ENCODE measurements at regions of chr10 and their contacts with region 1.

Region 1: DNA sequence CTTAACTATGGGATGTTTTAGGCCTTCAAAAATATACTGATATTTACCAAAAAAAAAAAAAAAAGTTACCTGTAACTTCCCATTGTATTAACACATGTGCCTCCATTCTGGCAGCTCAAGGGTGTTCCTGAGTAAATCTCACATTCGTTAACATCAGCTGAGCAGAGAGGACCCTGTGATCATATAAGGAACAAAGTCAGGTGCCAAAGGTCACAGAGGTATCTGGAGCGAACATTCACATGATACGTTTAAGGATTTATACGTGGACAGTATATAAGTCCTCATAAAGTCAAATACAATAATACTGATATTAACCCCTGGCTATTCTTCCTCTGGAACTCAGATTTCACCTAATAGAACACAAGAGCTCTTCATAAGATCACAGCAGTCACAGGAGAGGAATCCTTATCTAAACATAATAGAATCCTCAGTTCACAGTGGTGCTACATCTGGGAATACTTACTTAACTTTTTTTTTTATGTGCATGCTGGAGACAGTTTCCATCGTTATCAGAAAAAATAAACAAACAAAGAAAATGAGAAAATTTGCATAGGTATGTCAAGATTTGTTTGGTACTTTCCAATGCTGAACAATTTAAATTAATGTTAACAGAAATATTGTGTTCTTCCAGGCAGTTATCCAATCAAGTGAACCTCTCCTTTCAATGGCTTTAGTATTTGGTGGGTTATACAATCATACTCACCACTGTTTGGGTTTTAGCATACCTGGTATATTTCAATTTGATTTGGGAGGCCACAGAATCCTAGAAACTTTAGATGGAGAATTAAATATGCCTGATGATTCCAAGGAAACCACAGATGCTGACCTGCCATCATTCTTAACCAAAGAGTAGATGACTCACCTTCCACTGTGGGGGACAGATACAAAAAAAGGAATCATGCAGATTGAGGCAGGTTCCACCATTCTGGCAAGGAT is 6.6 kb downstream of the CUBN start:
- DNase-seq: no peak
- H3K4me3 ChIP-seq: no peak overlapping the region
- H3K4me3 Mint-ChIP-seq: peak overlapping the region; percentile 51
- H3K27ac Mint-ChIP-seq: peak overlapping the region; percentile 68
- H3K4me1 ChIP-seq: peaks cover 76% of the 10 kb centered on the region
- H3K4me1 Mint-ChIP-seq: peaks cover 67% of the 10 kb centered on the region
- H3K27me3 ChIP-seq: no peaks in the 10 kb centered on the region
- H3K27me3 Mint-ChIP-seq: no peaks in the 10 kb centered on the region
- CTCF ChIP-seq: no peak

Region 2: GRCh38 chr10:17067376-17068264 is 55.4 kb before region 1 on chr10:
- CTCF ChIA-PET with region 1: no interaction called
- POLR2A ChIA-PET with region 1: no interaction called
- intact Hi-C with region 1: no loop called
- DNase-seq: no peak
- H3K4me3 ChIP-seq: no peak overlapping the region
- H3K4me3 Mint-ChIP-seq: no peak overlapping the region
- H3K27ac Mint-ChIP-seq: no peak overlapping the region
- H3K4me1 ChIP-seq: peaks cover 4% of the 10 kb centered on the region; the same call in 1 of the 2 replicates
- H3K4me1 Mint-ChIP-seq: peaks cover 9% of the 10 kb centered on the region
- H3K27me3 ChIP-seq: no peaks in the 10 kb centered on the region
- H3K27me3 Mint-ChIP-seq: no peaks in the 10 kb centered on the region
- CTCF ChIP-seq: no peak

Region 3: GRCh38 chr10:17147884-17148489 is 25.0 kb after region 1 on chr10:
- CTCF ChIA-PET with region 1: no interaction called
- POLR2A ChIA-PET with region 1: no interaction called
- intact Hi-C with region 1: loop called (anchors 2 kb)
- DNase-seq: peak; percentile 58 to 65
- H3K4me3 ChIP-seq: no peak overlapping the region
- H3K4me3 Mint-ChIP-seq: no peak overlapping the region
- H3K27ac Mint-ChIP-seq: peak overlapping the region; percentile 51
- H3K4me1 ChIP-seq: peaks cover 34% of the 10 kb centered on the region
- H3K4me1 Mint-ChIP-seq: peaks cover 46% of the 10 kb centered on the region
- H3K27me3 ChIP-seq: no peaks in the 10 kb centered on the region
- H3K27me3 Mint-ChIP-seq: no peaks in the 10 kb centered on the region
- CTCF ChIP-seq: no peak